ENCODE measurements at regions of chr6 and their contacts with region 1.

Region 1: DNA sequence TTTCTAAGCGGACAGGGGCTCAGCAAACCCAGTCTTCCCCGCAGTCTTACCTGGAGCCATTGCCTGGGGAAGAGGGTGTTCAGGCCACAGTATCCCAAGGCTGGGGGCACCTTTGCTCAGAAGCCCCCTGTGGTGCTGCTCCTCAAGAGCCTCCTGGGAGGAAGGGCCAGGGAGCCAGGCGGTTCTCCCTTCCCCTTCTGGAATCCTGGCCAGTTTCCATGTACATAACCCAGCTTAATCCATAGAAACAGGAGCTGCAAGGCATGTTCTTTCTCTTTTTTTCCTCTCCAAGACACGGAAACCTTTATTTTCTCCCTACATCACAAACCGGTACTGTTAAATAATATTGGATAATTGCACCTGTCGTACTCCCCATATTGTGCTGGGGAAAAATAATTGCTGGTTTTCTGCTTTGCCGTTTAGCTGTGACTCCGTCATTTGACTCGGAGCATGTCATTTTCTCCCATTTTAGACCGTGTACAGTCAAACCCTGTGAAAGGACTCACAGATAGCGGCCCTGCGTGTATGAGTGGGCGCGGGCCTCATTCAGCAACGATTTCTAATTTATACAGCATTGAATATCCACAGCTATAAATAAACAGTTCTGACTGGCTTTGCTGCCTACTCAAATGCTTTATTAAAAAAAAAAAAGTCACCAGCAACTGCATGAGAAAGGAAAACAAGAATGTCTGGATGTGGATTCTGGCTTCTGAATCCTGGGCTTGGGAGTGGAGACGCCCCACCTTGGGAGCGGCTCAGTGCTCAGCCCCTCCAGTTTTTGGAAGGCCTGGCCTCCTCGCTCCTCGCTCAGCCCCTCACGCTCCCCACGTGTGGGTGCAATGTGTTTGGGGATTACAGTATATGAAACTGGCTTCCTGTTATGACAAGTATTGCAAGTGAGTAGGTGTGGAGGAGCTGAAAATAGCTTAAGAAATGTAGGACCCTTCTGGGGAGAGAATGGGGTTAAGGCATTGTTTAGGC is 67.3 kb downstream of the ADTRP start:
- DNase-seq: peak; percentile 67
- ATAC-seq: peak; percentile 62
- H3K4me3 ChIP-seq: peak overlapping the region; percentile 17; the same call in 1 of the 2 replicates
- H3K27ac ChIP-seq: peak overlapping the region; percentile 75
- H3K4me1 ChIP-seq: peaks cover 45% of the 10 kb centered on the region
- H3K27me3 ChIP-seq: no peaks in the 10 kb centered on the region
- CTCF ChIP-seq: no peak
- EP300 ChIP-seq: peak; percentile 73 to 78; a peak in 2 of 4 replicates
- POLR2A ChIP-seq: 0 out of 2 replicates have a peak, but pooled peaks have one; percentile 32
- RAD21 ChIP-seq: peak; percentile 15; the same call in 1 of the 2 replicates

Region 2: DNA sequence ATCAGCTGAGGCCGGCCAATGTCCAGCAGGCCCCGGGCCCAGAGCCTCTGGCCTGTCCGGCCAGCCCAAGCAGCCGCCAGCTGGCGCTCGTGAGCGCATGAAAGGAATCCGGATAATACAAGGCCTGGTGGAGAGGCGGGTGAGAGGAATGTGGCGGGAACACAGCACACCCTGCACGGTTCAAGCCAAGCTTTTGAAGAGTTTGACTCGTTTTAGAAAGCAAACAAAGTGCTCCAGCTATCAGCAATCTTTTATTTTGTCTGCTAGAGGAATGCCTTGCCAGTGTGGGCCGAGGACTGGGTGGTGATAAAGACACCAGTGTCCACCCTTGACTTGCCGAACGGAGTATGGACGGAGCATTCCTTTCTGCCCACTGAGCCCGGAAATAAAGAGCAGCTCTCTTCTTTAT is 469.5 kb before region 1 on chr6:
- CTCF ChIA-PET with region 1: no interaction called
- POLR2A ChIA-PET with region 1: no interaction called
- RAD21 ChIA-PET with region 1: no interaction called
- SMC1A ChIA-PET with region 1: no interaction called
- in situ Hi-C with region 1: no loop called
- intact Hi-C with region 1: no loop called
- DNase-seq: no peak
- ATAC-seq: no peak
- H3K4me3 ChIP-seq: no peak overlapping the region
- H3K27ac ChIP-seq: no peak overlapping the region
- H3K4me1 ChIP-seq: peaks cover 3% of the 10 kb centered on the region; the same call in 1 of the 2 replicates
- H3K27me3 ChIP-seq: no peaks in the 10 kb centered on the region
- CTCF ChIP-seq: no peak
- EP300 ChIP-seq: no peak
- POLR2A ChIP-seq: no peak
- RAD21 ChIP-seq: no peak

Region 3: DNA sequence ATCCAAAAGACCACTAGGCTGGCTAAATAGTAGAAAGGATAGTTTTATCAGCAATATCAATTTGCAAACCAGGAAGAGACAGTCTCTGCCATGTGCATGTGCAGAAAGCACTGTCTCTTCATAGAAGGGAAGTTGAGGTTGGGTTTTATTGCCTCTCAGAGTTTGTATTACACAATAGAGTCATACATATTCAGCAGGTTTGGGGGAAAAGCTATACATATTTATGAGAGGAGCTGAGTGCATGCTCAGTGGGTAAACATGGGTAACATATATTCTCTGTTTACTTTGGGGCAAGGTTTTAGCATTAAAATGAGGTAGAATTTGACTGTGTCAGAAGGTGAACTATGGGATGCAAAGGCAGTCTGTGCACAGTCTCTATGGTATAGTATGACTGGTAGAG is 158.9 kb before region 1 on chr6:
- CTCF ChIA-PET with region 1: no interaction called
- POLR2A ChIA-PET with region 1: no interaction called
- RAD21 ChIA-PET with region 1: no interaction called
- SMC1A ChIA-PET with region 1: no interaction called
- in situ Hi-C with region 1: no loop called
- intact Hi-C with region 1: no loop called
- DNase-seq: no peak
- ATAC-seq: no peak; the same call in 2 of the 3 replicates
- H3K4me3 ChIP-seq: no peak overlapping the region
- H3K27ac ChIP-seq: no peak overlapping the region
- H3K4me1 ChIP-seq: no peaks in the 10 kb centered on the region
- H3K27me3 ChIP-seq: no peaks in the 10 kb centered on the region
- CTCF ChIP-seq: no peak
- EP300 ChIP-seq: no peak
- POLR2A ChIP-seq: no peak
- RAD21 ChIP-seq: no peak

Region 4: DNA sequence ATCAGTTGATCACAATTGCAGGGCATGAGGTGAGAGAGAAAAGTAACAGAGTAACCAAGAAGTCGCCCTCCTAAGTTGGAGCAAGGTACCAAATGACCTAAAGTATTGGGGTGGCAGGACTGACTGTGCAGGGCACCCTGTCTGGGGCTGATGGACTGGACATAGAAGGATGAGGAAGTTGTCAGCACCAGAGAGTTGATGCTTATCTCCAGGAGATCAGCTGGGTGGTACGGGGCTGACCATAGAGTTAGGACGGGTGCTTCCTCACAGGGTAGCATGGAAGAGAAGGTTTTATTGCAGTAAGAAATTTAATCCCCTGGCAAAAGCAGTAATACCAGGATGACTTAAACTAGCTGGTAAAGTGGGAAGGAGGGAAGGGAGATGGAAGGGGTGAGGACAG is 107.1 kb before region 1 on chr6:
- CTCF ChIA-PET with region 1: no interaction called
- POLR2A ChIA-PET with region 1: no interaction called
- RAD21 ChIA-PET with region 1: no interaction called
- SMC1A ChIA-PET with region 1: no interaction called
- in situ Hi-C with region 1: no loop called
- intact Hi-C with region 1: no loop called
- DNase-seq: no peak
- ATAC-seq: no peak
- H3K4me3 ChIP-seq: no peak overlapping the region
- H3K27ac ChIP-seq: no peak overlapping the region
- H3K4me1 ChIP-seq: no peaks in the 10 kb centered on the region
- H3K27me3 ChIP-seq: peaks cover 2 to 3% of the 10 kb centered on the region in 2 experiments; a peak in 2 of 4 replicates
- CTCF ChIP-seq: no peak
- EP300 ChIP-seq: no peak
- POLR2A ChIP-seq: no peak
- RAD21 ChIP-seq: no peak

Region 5: GRCh38 chr6:11700118-11700718 is 11.1 kb before region 1 on chr6:
- CTCF ChIA-PET with region 1: interaction called, 11 read pairs
- POLR2A ChIA-PET with region 1: interaction called, 5 read pairs
- RAD21 ChIA-PET with region 1: interaction called, 34 read pairs
- SMC1A ChIA-PET with region 1: interaction called, 56 read pairs
- in situ Hi-C with region 1: no loop called
- intact Hi-C with region 1: no loop called
- DNase-seq: no peak
- ATAC-seq: peak; percentile 70
- H3K4me3 ChIP-seq: no peak overlapping the region
- H3K27ac ChIP-seq: no peak overlapping the region
- H3K4me1 ChIP-seq: peaks cover 4% of the 10 kb centered on the region
- H3K27me3 ChIP-seq: no peaks in the 10 kb centered on the region
- CTCF ChIP-seq: peak; percentile 35 to 50 (median 35); a peak in 3 of 6 replicates
- EP300 ChIP-seq: no peak
- POLR2A ChIP-seq: no peak
- RAD21 ChIP-seq: peak; percentile 82

Region 6: DNA sequence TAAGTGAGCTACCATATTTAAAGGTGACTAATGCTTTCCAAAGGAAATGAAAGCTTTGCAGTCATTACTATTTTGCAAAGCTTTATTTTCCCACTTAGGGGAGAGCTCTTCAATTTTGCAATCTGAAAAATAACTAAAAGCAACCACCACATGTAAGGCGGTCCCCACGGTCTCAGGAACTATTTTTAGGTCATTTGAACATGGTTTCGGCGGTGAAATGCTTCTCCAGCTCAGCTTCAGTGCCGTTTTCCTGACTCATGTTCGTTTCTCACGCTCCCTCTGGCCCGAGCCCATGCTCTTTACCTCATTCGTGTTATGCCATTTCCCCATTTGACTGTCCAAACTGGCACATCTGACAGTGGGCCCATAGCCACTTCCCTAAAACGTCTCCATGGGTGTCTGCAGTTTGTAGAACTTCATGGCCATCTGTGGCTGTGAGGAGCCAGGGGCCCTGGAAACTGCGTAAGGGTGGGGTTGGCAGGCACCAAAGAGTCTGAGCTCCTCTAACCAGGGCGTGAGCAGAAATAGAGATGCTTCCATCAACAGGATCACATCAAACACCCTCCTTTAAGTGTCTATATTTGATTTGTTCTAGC is 20.8 kb after region 1 on chr6:
- CTCF ChIA-PET with region 1: interaction called, 12 read pairs
- POLR2A ChIA-PET with region 1: interaction called, 25 read pairs
- RAD21 ChIA-PET with region 1: interaction called, 88 read pairs
- SMC1A ChIA-PET with region 1: interaction called, 139 read pairs
- in situ Hi-C with region 1: no loop called
- intact Hi-C with region 1: loop called (anchors 1 kb)
- DNase-seq: peak; percentile 99
- ATAC-seq: peak; percentile 87
- H3K4me3 ChIP-seq: no peak overlapping the region
- H3K27ac ChIP-seq: peak overlapping the region; percentile 89
- H3K4me1 ChIP-seq: peaks cover 43% of the 10 kb centered on the region
- H3K27me3 ChIP-seq: no peaks in the 10 kb centered on the region
- CTCF ChIP-seq: no peak
- EP300 ChIP-seq: peak; percentile 86 to 94
- POLR2A ChIP-seq: peak; percentile 56
- RAD21 ChIP-seq: peak; percentile 47

Region 7: DNA sequence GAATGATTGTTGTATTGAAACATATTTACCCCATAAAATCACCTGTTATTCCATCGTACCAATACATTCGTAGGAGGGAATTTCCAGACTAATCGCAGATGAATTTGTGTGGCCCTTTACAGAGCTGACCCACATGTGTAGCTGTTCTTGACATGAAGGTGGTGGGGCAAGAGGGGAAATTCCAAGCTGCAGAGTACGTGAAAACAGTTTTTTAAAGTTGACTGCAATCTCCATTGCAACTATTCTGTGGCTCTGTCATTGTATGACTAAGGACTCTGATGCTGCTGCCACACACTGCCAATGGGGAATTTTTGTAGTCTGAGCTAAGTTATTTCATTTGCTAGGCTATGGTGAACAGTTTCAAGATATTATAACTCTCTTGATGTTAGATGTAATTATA is 113.7 kb after region 1 on chr6:
- CTCF ChIA-PET with region 1: interaction called, 7 read pairs
- POLR2A ChIA-PET with region 1: interaction called, 22 read pairs
- RAD21 ChIA-PET with region 1: interaction called, 93 read pairs
- SMC1A ChIA-PET with region 1: interaction called, 42 read pairs
- in situ Hi-C with region 1: loop called (anchors 5 kb)
- intact Hi-C with region 1: no loop called
- DNase-seq: peak; percentile 91
- ATAC-seq: peak; percentile 86
- H3K4me3 ChIP-seq: no peak overlapping the region
- H3K27ac ChIP-seq: peak overlapping the region; percentile 70
- H3K4me1 ChIP-seq: peaks cover 47% of the 10 kb centered on the region
- H3K27me3 ChIP-seq: no peaks in the 10 kb centered on the region
- CTCF ChIP-seq: no peak
- EP300 ChIP-seq: peak; percentile 90; a peak in 3 of 4 replicates
- POLR2A ChIP-seq: no peak
- RAD21 ChIP-seq: peak; percentile 14

Region 8: DNA sequence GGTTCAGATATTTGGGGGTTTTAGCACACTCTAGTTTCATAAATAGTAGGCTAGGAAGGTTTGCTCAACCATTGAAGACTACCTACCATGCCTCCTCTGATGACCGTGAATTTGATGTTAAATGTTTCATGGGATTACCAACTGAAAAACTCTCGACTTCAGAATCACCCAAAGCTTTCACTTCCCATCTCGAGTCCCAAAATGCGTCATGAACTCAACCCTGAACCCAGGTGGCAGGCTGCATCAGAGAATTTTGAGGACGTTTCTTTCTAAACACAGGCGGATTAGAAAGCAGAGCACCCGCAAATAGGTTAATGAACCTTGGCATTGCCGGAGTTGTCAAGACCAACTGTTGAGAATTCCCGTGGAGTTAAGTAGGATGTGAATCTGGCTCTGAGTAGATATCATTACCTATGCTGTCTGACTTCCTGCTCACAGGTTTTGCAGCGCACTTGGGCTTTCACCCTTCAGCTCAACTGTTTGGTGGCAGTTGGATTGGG is 165.7 kb after region 1 on chr6:
- CTCF ChIA-PET with region 1: interaction called, 3 read pairs
- POLR2A ChIA-PET with region 1: interaction called, 8 read pairs
- RAD21 ChIA-PET with region 1: interaction called, 16 read pairs
- SMC1A ChIA-PET with region 1: interaction called, 7 read pairs
- in situ Hi-C with region 1: no loop called
- intact Hi-C with region 1: loop called (anchors 2 kb)
- DNase-seq: peak; percentile 91
- ATAC-seq: peak; percentile 90
- H3K4me3 ChIP-seq: peak overlapping the region; percentile 22; the same call in 1 of the 2 replicates
- H3K27ac ChIP-seq: peak overlapping the region; percentile 82
- H3K4me1 ChIP-seq: peaks cover 19% of the 10 kb centered on the region
- H3K27me3 ChIP-seq: no peaks in the 10 kb centered on the region
- CTCF ChIP-seq: no peak
- EP300 ChIP-seq: peak; percentile 92 to 94; a peak in 3 of 4 replicates
- POLR2A ChIP-seq: no peak
- RAD21 ChIP-seq: no peak; the same call in 1 of the 2 replicates

Region 9: DNA sequence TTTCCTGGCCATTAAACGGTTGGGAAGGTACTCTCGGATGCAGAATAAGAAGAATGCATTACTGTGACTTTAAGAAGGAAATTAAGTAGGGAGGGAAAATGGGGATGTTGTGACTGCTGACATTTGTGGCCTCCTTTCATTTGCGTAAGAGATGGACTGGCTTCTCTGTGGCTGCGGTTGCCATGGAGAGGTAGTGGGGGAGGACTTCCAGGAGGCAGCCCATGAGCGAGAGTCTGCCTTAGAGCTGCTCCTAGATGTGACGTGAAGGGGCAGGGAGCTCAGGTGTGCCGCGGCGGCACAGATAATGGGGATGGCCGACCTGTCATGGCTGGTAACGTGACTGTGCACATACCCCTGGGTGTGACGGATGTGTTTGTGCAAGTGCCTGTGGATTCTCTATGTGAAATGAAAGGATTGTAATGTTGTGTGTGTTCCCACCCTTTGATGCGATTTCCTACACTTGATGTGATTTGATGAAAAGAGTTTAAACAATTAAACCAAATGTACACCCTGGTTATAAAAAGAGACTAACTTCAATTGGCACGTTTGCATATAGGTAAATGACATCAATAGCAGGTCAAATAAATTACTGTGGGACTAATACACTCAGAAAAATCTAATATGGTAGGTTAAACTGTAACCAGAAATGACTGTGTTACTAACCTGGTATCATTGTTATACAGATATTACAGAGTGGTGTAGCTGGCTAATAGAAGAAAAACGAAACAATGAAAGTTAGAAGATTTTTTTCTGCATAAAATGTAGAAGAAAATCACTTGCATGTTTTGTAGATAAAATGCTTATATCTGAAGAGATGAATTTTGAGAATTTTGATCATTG is 349.7 kb after region 1 on chr6:
- CTCF ChIA-PET with region 1: interaction called, 4 read pairs
- POLR2A ChIA-PET with region 1: interaction called, 3 read pairs
- RAD21 ChIA-PET with region 1: interaction called, 21 read pairs
- SMC1A ChIA-PET with region 1: interaction called, 7 read pairs
- in situ Hi-C with region 1: no loop called
- intact Hi-C with region 1: loop called (anchors 5 kb)
- DNase-seq: peak; percentile 87
- ATAC-seq: peak; percentile 82
- H3K4me3 ChIP-seq: peak overlapping the region; percentile 57; the same call in 1 of the 2 replicates
- H3K27ac ChIP-seq: peak overlapping the region; percentile 85
- H3K4me1 ChIP-seq: peaks cover 44% of the 10 kb centered on the region
- H3K27me3 ChIP-seq: no peaks in the 10 kb centered on the region
- CTCF ChIP-seq: no peak
- EP300 ChIP-seq: peak; percentile 94
- POLR2A ChIP-seq: peak; percentile 70
- RAD21 ChIP-seq: no peak

Region 10: GRCh38 chr6:12150812-12151432 is 439.6 kb after region 1 on chr6:
- CTCF ChIA-PET with region 1: no interaction called
- POLR2A ChIA-PET with region 1: no interaction called
- RAD21 ChIA-PET with region 1: no interaction called
- SMC1A ChIA-PET with region 1: no interaction called
- in situ Hi-C with region 1: no loop called
- intact Hi-C with region 1: no loop called
- DNase-seq: no peak
- ATAC-seq: peak; percentile 46; the same call in 2 of the 3 replicates
- H3K4me3 ChIP-seq: no peak overlapping the region
- H3K27ac ChIP-seq: no peak overlapping the region
- H3K4me1 ChIP-seq: no peaks in the 10 kb centered on the region
- H3K27me3 ChIP-seq: no peaks in the 10 kb centered on the region
- CTCF ChIP-seq: peak; percentile 28 to 40 (median 32)
- EP300 ChIP-seq: no peak
- POLR2A ChIP-seq: no peak
- RAD21 ChIP-seq: peak; percentile 63

Region 11: GRCh38 chr6:12354499-12354898 is 643.2 kb after region 1 on chr6:
- CTCF ChIA-PET with region 1: interaction called, 3 read pairs
- POLR2A ChIA-PET with region 1: no interaction called
- RAD21 ChIA-PET with region 1: interaction called, 7 read pairs
- SMC1A ChIA-PET with region 1: interaction called, 5 read pairs
- in situ Hi-C with region 1: no loop called
- intact Hi-C with region 1: loop called (anchors 5 kb)
- DNase-seq: peak; percentile 91
- ATAC-seq: peak; percentile 77
- H3K4me3 ChIP-seq: no peak overlapping the region
- H3K27ac ChIP-seq: peak overlapping the region; percentile 56
- H3K4me1 ChIP-seq: peaks cover 47% of the 10 kb centered on the region
- H3K27me3 ChIP-seq: no peaks in the 10 kb centered on the region
- CTCF ChIP-seq: no peak
- EP300 ChIP-seq: peak; percentile 43 to 56; a peak in 2 of 4 replicates
- POLR2A ChIP-seq: no peak
- RAD21 ChIP-seq: no peak